Left ventricle myocardium inferior (tissue), 1 donor: ENCODE measurements at regions of chr7 and their contacts with region 1.

Region 1: DNA sequence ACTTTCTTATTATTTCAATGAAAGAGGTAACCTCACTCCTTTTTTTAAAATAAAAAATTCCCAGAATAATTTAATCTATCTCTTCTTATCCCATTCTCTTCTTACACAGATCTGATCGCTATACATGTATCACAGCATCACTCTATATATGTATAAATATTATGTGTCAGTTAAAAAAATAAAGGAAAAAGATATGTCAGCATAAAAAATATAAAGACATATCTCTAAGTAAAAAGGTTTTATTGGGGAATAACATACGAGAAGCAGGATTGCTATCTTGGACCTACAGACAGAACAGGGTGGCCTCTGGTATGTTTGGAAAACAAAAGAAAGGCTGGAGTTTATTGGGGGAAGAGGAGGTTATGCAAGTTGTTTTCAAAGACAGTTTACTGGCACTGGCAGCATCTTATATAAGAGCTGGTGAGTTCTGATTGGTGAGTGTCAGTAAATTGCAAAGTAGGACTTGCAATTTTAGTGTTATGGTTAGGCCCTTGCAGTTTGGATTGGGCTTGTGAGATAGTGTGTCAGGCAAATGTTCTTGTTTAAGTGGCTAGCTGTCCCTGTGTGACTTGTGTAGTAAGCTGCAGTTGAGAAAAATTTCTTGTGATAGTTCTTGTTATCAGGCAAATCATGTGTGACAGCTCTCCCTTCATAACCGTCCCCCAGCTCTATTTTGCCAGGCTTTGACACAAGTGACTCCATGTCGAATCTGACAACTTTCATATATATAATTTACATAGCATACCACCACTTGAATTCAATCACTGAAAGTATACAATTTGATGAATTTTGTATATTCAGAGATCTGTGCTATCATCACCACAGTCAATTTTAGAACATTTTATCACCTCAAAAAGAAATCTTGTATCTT is 118.2 kb downstream of the HBP1 start:
- DNase-seq: no peak
- H3K4me3 ChIP-seq: no peak overlapping the region
- H3K27ac ChIP-seq: peak overlapping the region; percentile 86
- H3K4me1 ChIP-seq: peaks cover 15% of the 10 kb centered on the region
- H3K27me3 ChIP-seq: no peaks in the 10 kb centered on the region
- CTCF ChIP-seq: no peak

Region 2: DNA sequence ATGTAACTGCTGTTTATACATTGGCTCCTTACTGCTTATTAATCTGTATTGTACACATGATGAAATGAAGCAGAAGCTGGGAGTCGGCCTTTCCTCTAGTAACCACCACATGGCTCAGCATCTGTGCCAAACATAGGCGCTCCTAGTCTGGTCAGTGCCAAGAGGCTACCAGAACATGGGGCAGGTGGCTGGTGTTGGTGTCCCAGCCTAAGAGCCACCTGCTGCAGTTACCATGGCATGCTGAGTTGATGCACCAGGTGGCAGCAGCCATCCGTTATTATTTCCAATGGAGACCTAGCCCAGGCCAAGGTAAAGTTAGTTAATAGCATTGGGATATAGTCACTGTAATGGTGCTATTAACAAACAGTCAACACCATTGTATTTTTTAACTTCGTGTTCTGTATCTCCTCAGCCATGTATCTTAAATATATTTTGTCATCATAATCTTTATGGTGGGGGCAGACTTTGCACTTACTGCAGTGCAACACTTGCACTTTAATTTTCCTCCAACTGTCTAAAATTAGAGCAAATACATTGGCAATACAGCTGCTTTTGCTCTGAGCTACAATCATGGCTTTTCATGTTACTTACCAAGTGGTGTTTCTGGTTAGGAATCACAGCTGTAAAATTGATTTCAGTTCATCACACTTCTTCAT is 85.1 kb before region 1 on chr7:
- intact Hi-C with region 1: loop called (anchors 10 kb)
- DNase-seq: peak; percentile 60
- H3K4me3 ChIP-seq: no peak overlapping the region
- H3K27ac ChIP-seq: peak overlapping the region; percentile 67
- H3K4me1 ChIP-seq: peaks cover 25% of the 10 kb centered on the region
- H3K27me3 ChIP-seq: no peaks in the 10 kb centered on the region
- CTCF ChIP-seq: peak; percentile 71